H1 (cell line): ENCODE measurements at regions of chr12 and their contacts with region 1.

Region 1: GRCh38 chr12:46268590-46269558 is at the start of gene SLC38A1:
- DNase-seq: peak in 1 of 2 experiments; percentile 83
- H3K4me3 ChIP-seq: peak within 1 kb of the TSS; percentile 91 to 98 (median 96)
- H3K27ac ChIP-seq: peak within 1 kb of the TSS; percentile 97
- H3K4me1 ChIP-seq: peaks cover 3 to 18% (median 10%) of the 10 kb centered on the region in 4 experiments; a peak in 6 of 7 replicates
- H3K27me3 ChIP-seq: no peaks in the 10 kb centered on the region
- CTCF ChIP-seq: no peak
- EP300 ChIP-seq: no peak
- POLR2A ChIP-seq: peak; percentile 49 to 63; a peak in 2 of 3 replicates
- RAD21 ChIP-seq: peak in 1 of 2 experiments; percentile 18; a peak in 1 of 4 replicates
- total RNA-seq, gene SLC38A1: 242 and 253 TPM in 2 replicates

Region 2: GRCh38 chr12:46224386-46224785 is 44.5 kb before region 1 on chr12:
- CTCF ChIA-PET with region 1: no interaction called
- POLR2A ChIA-PET with region 1: interaction called, 14 read pairs
- DNase-seq: no peak
- H3K4me3 ChIP-seq: no peak overlapping the region
- H3K27ac ChIP-seq: no peak overlapping the region
- H3K4me1 ChIP-seq: peaks cover 0 to 22% (median 6%) of the 10 kb centered on the region in 4 experiments; a peak in 4 of 7 replicates
- H3K27me3 ChIP-seq: no peaks in the 10 kb centered on the region
- CTCF ChIP-seq: no peak
- EP300 ChIP-seq: no peak
- POLR2A ChIP-seq: no peak
- RAD21 ChIP-seq: no peak

Region 3: DNA sequence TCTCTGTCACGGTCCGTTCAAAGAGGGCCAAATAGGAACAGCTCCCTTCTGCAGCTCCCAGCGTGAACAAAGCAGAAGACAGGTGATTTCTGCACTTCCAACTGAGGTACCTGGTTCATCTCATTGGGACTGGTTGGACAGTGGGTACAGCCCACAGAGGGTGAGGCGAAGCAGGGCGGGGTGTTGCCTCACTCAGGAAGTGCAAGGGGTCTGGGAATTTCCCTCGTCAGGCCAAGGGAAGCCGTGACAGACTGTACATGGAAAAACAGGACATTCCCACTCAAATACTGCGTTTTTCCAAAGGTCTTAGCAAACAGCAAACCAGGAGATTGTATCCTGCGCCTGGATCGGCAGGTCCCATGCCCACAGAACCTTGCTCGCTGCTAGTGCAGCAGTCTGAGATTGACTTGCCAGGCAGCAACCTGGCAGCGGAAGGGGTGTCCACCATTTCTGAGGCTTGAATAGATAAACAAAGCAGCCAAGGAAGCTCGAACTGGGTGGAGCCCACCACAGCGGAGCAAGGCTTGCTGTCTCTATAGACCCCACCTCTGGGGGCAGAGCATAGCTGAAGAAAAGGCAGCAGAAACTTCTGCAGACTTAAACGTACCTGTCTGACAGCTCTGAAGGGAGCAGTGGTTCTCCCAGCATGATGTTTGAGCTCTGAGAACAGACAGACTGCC is 22.7 kb before region 1 on chr12:
- CTCF ChIA-PET with region 1: interaction called, 8 read pairs
- POLR2A ChIA-PET with region 1: interaction called, 57 read pairs
- DNase-seq: no peak
- H3K4me3 ChIP-seq: no peak overlapping the region
- H3K27ac ChIP-seq: no peak overlapping the region
- H3K4me1 ChIP-seq: no peaks in the 10 kb centered on the region; a peak in 1 of 7 replicates
- H3K27me3 ChIP-seq: no peaks in the 10 kb centered on the region
- CTCF ChIP-seq: no peak
- EP300 ChIP-seq: no peak
- POLR2A ChIP-seq: 0 out of 3 replicates have a peak, but pooled peaks of 1 of the 2 experiments have one; percentile 13
- RAD21 ChIP-seq: no peak

Region 4: GRCh38 chr12:46357438-46358324 is 88.8 kb after region 1 on chr12:
- CTCF ChIA-PET with region 1: interaction called, 3 read pairs
- POLR2A ChIA-PET with region 1: interaction called, 13 read pairs
- DNase-seq: no peak
- H3K4me3 ChIP-seq: no peak overlapping the region
- H3K27ac ChIP-seq: no peak overlapping the region; the same call in 1 of the 2 replicates
- H3K4me1 ChIP-seq: no peaks in the 10 kb centered on the region
- H3K27me3 ChIP-seq: no peaks in the 10 kb centered on the region
- CTCF ChIP-seq: no peak
- EP300 ChIP-seq: no peak
- POLR2A ChIP-seq: peak; percentile 51 to 83
- RAD21 ChIP-seq: no peak

Region 5: GRCh38 chr12:46372544-46373110 is 103.8 kb after region 1 on chr12 and contains the start of gene SLC38A2:
- CTCF ChIA-PET with region 1: interaction called, 3 read pairs
- POLR2A ChIA-PET with region 1: interaction called, 48 read pairs
- DNase-seq: peak in 1 of 2 experiments; percentile 98
- H3K4me3 ChIP-seq: peak within 1 kb of the TSS; percentile 87 to 99 (median 88)
- H3K27ac ChIP-seq: peak within 1 kb of the TSS; percentile 93
- H3K4me1 ChIP-seq: peaks cover 7 to 12% (median 8%) of the 10 kb centered on the region in 4 experiments; a peak in 6 of 7 replicates
- H3K27me3 ChIP-seq: no peaks in the 10 kb centered on the region
- CTCF ChIP-seq: no peak
- EP300 ChIP-seq: no peak
- POLR2A ChIP-seq: peak; percentile 98 to 99
- RAD21 ChIP-seq: no peak; a peak in 1 of 4 replicates
- total RNA-seq, gene SLC38A2: 620 and 684 TPM in 2 replicates